ENCODE measurements at regions of chr18 and their contacts with region 1.

Region 1: DNA sequence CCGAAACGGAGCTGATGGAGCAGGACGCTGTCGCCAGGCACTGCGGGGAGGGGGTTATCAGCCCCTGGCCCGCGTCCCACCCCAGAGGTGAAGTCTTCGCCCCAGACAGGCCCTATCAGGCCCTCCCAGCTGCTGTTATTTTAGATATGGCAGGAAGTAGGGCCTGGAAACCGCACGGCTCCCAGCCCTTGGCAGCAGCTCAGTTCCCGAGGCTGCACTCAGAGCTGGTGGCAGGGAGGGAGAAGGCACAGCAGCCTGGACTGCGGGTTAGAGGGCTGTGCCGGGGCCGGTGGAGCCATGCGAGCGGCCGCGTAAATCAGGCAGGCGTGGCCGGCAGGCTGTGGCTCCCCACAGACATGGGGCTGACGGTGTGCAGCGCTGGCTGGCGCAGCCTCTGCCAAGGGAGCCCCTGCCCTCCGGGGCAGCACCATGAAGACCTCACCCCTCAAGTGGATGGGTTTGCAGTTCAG is 111.4 kb downstream of the NFATC1 start:
- DNase-seq: peak; percentile 81 to 90 (median 88)
- ATAC-seq: peak; percentile 91 to 93 (median 92)
- H3K4me3 ChIP-seq: peak overlapping the region in 11 of 12 donors; percentile 25 to 55 (median 44)
- H3K27ac ChIP-seq: peak overlapping the region; percentile 85 to 97 (median 92)
- H3K4me1 ChIP-seq: peaks cover 3 to 38% (median 29%) of the 10 kb centered on the region in 12 donors
- H3K27me3 ChIP-seq: no peaks in the 10 kb centered on the region
- CTCF ChIP-seq: no peak
- POLR2A ChIP-seq: no peak

Region 2: DNA sequence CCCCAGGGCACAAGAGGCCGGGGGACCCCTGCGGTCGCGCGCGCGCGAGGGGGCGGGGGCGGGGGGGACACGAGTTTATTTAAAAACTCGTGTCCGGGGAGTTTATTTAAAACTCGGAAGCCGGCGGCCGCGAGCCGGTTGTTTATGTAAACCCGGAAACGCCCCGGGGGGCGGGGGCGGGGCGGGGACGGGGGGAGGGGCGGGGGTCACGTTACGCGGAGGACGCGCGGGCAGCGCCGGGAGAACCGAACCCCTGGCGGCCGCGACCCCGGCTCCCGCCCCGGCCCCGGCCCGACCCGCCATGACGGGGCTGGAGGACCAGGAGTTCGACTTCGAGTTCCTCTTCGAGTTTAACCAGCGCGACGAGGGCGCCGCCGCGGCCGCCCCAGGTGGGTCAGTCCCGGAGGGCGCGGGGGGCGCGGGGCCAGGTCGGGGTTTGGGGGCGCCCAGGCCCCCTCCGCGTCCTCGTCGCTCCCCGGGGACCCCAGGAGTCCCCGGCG is 107.0 kb before region 1 on chr18:
- intact Hi-C with region 1: loop called in 2 of 10 experiments (anchors 2 to 5 kb)
- DNase-seq: peak; percentile 62 to 89 (median 77)
- ATAC-seq: peak in 1 of 4 donors; percentile 18
- H3K4me3 ChIP-seq: peak overlapping the region; percentile 56 to 96 (median 81)
- H3K27ac ChIP-seq: peak overlapping the region in 11 of 12 donors; percentile 67 to 94 (median 84)
- H3K4me1 ChIP-seq: peaks cover 5 to 68% (median 49%) of the 10 kb centered on the region in 12 donors
- H3K27me3 ChIP-seq: peaks cover 0 to 9% (median 0%) of the 10 kb centered on the region in 9 donors
- CTCF ChIP-seq: no peak
- POLR2A ChIP-seq: no peak

Region 3: DNA sequence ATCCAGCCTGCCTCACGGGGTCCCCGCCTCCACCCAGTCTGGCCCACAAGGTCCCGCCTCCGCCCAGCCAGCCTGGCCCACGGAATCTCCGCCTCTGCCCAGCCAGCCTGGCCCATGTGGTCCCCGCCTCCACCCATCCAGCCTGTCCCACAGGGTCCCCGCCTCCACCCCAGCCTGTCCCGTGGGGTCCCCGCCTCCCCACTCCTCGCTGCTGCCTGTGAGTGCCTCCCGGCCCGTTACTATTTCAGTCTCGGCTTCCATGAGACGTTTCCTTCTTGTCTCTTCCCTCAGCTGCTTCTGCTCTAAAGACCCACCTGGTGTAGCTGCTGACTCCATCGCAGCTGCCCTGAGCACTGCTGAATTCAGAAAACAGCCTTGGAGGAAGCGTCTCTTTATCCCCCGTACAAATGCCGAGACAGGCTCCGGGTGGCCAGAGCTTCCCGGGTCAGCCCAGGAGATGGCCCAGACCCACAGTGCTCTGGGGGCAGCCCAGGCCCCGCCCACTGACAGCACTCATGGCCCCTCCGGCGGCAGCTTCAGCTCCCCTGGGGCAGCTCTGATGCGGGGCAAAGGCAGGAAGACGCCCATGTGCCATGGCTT is 41.6 kb before region 1 on chr18:
- intact Hi-C with region 1: loop called in 1 of 10 experiments (anchors 5 kb)
- DNase-seq: peak in 3 of 5 donors; percentile 41 to 53 (median 53)
- ATAC-seq: peak in 3 of 4 donors; percentile 67 to 79 (median 77)
- H3K4me3 ChIP-seq: peak overlapping the region in 5 of 12 donors; percentile 8 to 47 (median 35)
- H3K27ac ChIP-seq: peak overlapping the region in 7 of 12 donors; percentile 3 to 70 (median 38)
- H3K4me1 ChIP-seq: peaks cover 3 to 27% (median 16%) of the 10 kb centered on the region in 12 donors
- H3K27me3 ChIP-seq: no peaks in the 10 kb centered on the region
- CTCF ChIP-seq: no peak
- POLR2A ChIP-seq: no peak